ENCODE measurements at regions of chr16 and their contacts with region 1.

Region 1: DNA sequence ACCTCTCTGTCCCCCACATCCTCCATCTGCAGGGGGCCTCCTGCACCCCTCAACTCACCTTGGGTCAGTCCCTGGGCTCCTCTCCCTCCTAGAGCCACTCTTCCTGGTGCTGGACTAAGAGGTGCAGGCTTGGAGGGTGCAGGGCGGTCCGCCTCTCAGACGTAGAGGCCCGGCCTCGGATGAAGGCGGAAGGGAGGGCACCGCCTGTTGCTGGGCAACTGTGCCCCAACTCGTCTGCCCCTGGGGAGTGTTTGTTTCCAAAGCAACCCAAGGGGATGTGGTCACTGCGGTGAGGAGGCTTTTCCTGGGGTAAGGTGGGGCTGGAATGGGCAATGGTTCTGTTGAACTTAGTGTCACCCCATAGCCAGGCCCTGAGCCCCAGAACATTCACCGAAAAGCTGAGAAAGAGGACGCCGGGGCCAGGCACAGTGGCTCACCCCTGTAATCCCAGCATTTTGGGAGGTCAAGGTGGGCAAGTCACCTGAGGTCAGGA is at the start of gene C16orf54:
- DNase-seq: peak; percentile 81 to 100 (median 98)
- ATAC-seq: peak; percentile 71 to 83
- H3K4me3 Mint-ChIP-seq: peak within 1 kb of the TSS; percentile 96 to 100 (median 99)
- H3K27ac Mint-ChIP-seq: peak within 1 kb of the TSS; percentile 82 to 100 (median 100)
- H3K4me1 Mint-ChIP-seq: peaks cover 34 to 76% (median 67%) of the 10 kb centered on the region in 4 donors
- H3K27me3 Mint-ChIP-seq: peaks cover 0 to 4% (median 0%) of the 10 kb centered on the region in 5 donors
- polyA plus RNA-seq, gene C16orf54: 20.7 to 32.7 (median 29.2) TPM

Region 2: GRCh38 chr16:29645694-29646187 is 100.2 kb before region 1 on chr16:
- POLR2A ChIA-PET with region 1: no interaction called
- DNase-seq: no peak
- ATAC-seq: no peak
- H3K4me3 Mint-ChIP-seq: peak overlapping the region in 1 of 10 donors; percentile 38
- H3K27ac Mint-ChIP-seq: peak overlapping the region in 4 of 10 donors; percentile 23 to 47 (median 40)
- H3K4me1 Mint-ChIP-seq: peaks cover 20 to 45% (median 30%) of the 10 kb centered on the region in 4 donors
- H3K27me3 Mint-ChIP-seq: no peaks in the 10 kb centered on the region

Region 3: GRCh38 chr16:29729116-29729521 is 16.8 kb before region 1 on chr16:
- POLR2A ChIA-PET with region 1: interaction called, 43 read pairs
- DNase-seq: no peak
- ATAC-seq: peak in 1 of 2 donors; percentile 33
- H3K4me3 Mint-ChIP-seq: no peak overlapping the region
- H3K27ac Mint-ChIP-seq: peak overlapping the region in 4 of 10 donors; percentile 40 to 72 (median 49)
- H3K4me1 Mint-ChIP-seq: peaks cover 14 to 38% (median 32%) of the 10 kb centered on the region in 4 donors
- H3K27me3 Mint-ChIP-seq: no peaks in the 10 kb centered on the region

Region 4: DNA sequence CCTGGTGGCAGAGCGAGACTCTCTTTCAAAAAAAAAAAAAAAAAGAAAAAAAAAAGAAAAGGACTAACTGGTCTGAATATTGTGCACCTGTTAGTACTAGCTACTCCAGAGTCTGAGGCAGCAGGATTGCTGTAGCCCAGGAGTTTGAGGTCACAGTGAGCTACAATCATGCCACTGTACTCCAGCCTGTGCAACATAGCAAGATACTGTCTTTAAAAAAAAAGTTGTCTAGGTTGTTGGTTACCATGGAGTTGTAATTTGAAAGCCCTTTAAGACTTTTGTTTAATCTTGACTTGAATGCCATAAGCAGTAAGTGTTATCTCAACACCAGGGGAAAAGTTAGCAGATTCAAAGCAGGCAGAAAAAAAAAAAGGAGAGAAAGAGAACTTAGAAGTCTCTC is 10.8 kb after region 1 on chr16:
- POLR2A ChIA-PET with region 1: interaction called, 15 read pairs
- DNase-seq: peak in 6 of 10 donors; percentile 28 to 71 (median 41)
- ATAC-seq: peak; percentile 89 to 92
- H3K4me3 Mint-ChIP-seq: peak overlapping the region in 8 of 10 donors; percentile 36 to 74 (median 50)
- H3K27ac Mint-ChIP-seq: peak overlapping the region; percentile 64 to 95 (median 87)
- H3K4me1 Mint-ChIP-seq: peaks cover 15 to 48% (median 41%) of the 10 kb centered on the region in 4 donors
- H3K27me3 Mint-ChIP-seq: no peaks in the 10 kb centered on the region

Region 5: DNA sequence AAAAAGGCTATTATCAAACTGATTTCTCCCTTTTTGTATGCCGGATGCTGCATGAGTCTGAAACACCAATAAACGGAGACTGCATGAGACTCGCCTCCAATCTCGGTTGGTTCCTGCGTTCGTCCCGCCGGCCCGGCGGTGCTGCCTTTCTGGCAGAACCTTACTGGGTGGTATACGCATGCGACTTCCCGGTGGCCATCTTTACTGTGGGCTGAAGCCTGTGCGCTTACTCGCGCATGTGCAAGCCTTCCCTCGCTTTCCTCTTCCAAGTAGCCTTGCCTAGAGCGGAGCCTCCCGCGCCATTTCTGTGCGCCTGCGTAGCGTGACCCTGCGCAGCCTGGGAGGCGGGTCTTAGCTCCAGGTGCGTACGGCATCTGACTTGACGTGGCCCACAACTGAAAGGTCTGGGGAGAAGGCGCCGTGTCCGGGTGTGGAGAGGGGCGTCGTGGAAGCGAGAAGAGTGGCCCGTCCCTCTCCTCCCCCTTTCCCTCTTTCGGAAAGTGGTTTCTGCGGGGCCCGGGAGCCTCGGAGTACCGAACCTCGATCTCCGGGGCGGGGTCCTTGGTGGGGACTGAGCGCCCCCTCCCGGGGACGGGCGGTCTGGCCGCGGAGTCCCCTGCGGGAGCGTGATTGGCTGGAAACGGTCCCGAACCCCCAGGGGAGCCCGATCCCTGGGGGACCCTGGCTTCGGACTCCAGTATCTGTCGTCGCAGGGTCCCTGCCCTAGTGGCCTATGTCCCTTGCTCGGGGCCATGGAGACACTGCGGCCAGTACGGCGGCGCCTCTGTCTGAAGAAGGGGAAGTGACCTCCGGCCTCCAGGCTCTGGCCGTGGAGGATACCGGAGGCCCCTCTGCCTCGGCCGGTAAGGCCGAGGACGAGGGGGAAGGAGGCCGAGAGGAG is 70.1 kb after region 1 on chr16 and contains the start of gene PAGR1:
- POLR2A ChIA-PET with region 1: interaction called, 123 read pairs
- DNase-seq: peak; percentile 91 to 100 (median 99)
- ATAC-seq: peak; percentile 71 to 80
- H3K4me3 Mint-ChIP-seq: peak within 1 kb of the TSS; percentile 93 to 100 (median 96)
- H3K27ac Mint-ChIP-seq: peak within 1 kb of the TSS; percentile 93 to 100 (median 98)
- H3K4me1 Mint-ChIP-seq: peaks cover 44 to 93% (median 70%) of the 10 kb centered on the region in 4 donors
- H3K27me3 Mint-ChIP-seq: peaks cover 0 to 1% (median 0%) of the 10 kb centered on the region in 5 donors
- polyA plus RNA-seq, gene PAGR1: 51.4 to 57.5 (median 55.5) TPM

Measured in naive thymus-derived CD8-positive, alpha-beta T cell (primary cell).